Heart left ventricle (tissue), 16 donors: ENCODE measurements at regions of chr11 and their contacts with region 1.

Region 1: GRCh38 chr11:114059278-114059983 is at the start of gene ZBTB16:
- DNase-seq: peak; percentile 89 to 95 (median 92)
- ATAC-seq: peak; percentile 66 to 82 (median 76)
- H3K4me3 ChIP-seq: peak within 1 kb of the TSS; percentile 60 to 99 (median 80)
- H3K27ac ChIP-seq: peak within 1 kb of the TSS; percentile 79 to 100 (median 98)
- H3K4me1 ChIP-seq: peaks cover 14 to 64% (median 48%) of the 10 kb centered on the region in 12 donors
- H3K27me3 ChIP-seq: peaks cover 0 to 13% (median 0%) of the 10 kb centered on the region in 9 donors
- CTCF ChIP-seq: peak in 11 of 12 donors; percentile 10 to 87 (median 42)
- POLR2A ChIP-seq: peak; percentile 92 to 98
- total RNA-seq, gene ZBTB16: 15.3 to 130 (median 62.8) TPM

Region 2: GRCh38 chr11:114036156-114036811 is 23.1 kb before region 1 on chr11:
- intact Hi-C with region 1: loop called in 2 of 10 experiments (anchors 2 kb)
- DNase-seq: peak; percentile 83 to 93 (median 91)
- ATAC-seq: peak; percentile 84 to 96 (median 94)
- H3K4me3 ChIP-seq: peak overlapping the region in 10 of 12 donors; percentile 26 to 60 (median 48)
- H3K27ac ChIP-seq: peak overlapping the region in 10 of 12 donors; percentile 50 to 88 (median 75)
- H3K4me1 ChIP-seq: peaks cover 4 to 30% (median 11%) of the 10 kb centered on the region in 12 donors
- H3K27me3 ChIP-seq: no peaks in the 10 kb centered on the region
- CTCF ChIP-seq: peak; percentile 85 to 96 (median 94)
- POLR2A ChIP-seq: peak in 1 of 2 donors; percentile 39

Region 3: DNA sequence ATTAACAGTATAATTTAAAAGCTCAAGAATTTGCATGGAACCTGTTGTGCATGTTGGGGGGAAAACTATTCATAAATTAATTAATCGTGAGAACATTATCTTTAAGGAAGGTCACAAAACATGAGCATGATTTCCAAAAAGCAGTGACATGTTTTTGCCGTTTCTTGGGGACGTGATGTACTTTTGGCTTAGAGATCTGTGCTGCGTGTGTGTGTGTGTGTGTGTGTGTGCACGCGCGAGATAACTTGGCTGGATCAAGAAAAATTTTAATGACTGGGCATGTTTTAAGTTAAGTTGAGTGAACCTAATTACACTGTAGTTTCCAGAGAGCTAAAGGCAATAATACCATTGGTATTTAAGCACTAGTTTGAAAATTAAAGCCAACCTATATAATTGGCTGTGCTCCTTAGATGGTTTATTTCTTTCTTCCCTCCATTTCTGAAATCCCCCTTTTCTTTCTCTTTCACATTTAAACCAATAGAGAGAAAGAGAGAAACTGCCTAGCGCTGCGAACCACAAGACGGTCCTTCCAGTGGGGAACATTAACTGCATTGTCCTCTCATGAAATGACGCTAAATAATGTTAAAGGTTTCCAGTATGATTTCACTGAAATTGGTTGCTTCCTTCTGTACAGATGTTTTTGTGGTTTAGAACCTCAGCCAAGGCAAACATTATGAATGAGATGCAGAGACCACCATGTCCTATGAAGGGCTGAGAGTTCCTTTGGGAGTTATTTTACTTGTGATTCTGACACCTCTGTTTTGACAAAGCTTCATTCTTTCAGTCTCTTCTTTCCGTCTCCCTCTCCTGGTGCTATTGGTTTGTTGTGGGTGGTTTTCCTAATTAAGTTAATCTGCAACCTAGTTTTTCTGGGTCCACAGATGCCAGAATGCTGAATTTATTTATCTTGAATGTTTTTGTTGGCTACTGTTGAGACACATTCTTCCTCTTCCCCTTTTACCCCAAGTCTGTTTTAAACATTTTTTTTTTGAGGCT is 51.8 kb after region 1 on chr11:
- intact Hi-C with region 1: loop called in 4 of 10 experiments (anchors 5 to 10 kb)
- DNase-seq: peak in 2 of 5 donors; percentile 59 to 73
- ATAC-seq: peak; percentile 30 to 72 (median 38)
- H3K4me3 ChIP-seq: peak overlapping the region in 9 of 12 donors; percentile 7 to 47 (median 36)
- H3K27ac ChIP-seq: peak overlapping the region; percentile 59 to 87 (median 74)
- H3K4me1 ChIP-seq: peaks cover 16 to 99% (median 71%) of the 10 kb centered on the region in 12 donors
- H3K27me3 ChIP-seq: no peaks in the 10 kb centered on the region
- CTCF ChIP-seq: peak in 1 of 12 donors; percentile 23
- POLR2A ChIP-seq: no peak

Region 4: DNA sequence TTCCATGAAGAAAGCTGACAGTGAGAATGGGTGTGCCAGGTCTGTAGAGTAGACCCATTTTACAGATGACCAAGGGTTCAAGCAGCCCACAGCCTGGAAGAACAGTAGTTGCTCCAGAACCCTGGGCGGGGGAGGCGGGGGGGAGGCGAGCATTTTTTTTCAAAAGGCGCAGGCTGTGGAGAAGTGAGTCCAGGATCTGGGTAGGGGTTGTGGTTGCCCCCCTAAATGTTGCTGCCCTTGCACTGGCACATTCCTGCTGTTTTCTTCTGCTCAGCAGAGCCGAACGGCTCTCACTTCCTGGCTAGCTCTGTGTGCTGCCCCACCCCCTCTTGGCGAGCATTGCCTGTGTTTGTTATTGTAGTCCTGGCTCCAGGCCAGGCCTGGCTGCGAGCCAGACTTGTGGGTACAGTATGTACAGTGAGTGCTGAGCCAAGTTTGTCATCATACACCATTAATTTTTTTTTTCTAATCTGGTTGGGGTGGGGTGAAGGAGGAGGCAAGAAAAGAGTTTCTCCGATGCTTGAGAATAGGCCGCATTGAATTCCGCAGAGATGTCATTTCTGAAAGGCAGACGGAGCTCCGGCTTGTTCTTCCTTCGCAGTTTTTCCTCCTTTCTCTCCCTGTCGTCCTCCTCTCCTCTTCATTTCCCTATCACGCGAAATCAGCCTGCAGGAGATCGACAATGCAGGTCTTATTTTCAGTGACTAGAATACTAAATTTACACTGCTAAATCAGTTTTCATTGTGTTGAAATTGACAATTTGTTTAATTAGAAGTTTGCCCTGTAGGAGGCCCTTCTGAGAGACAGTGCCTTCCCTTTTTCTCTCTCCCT is 100.6 kb after region 1 on chr11:
- intact Hi-C with region 1: loop called in 6 of 10 experiments (anchors 1 to 5 kb)
- DNase-seq: peak; percentile 98 to 100 (median 99)
- ATAC-seq: peak; percentile 65 to 80 (median 72)
- H3K4me3 ChIP-seq: peak overlapping the region in 11 of 12 donors; percentile 18 to 46 (median 33)
- H3K27ac ChIP-seq: peak overlapping the region; percentile 87 to 100 (median 98)
- H3K4me1 ChIP-seq: peaks cover 54 to 99% (median 90%) of the 10 kb centered on the region in 12 donors
- H3K27me3 ChIP-seq: no peaks in the 10 kb centered on the region
- CTCF ChIP-seq: peak in 1 of 12 donors; percentile 9
- POLR2A ChIP-seq: peak; percentile 33 to 79

Region 5: DNA sequence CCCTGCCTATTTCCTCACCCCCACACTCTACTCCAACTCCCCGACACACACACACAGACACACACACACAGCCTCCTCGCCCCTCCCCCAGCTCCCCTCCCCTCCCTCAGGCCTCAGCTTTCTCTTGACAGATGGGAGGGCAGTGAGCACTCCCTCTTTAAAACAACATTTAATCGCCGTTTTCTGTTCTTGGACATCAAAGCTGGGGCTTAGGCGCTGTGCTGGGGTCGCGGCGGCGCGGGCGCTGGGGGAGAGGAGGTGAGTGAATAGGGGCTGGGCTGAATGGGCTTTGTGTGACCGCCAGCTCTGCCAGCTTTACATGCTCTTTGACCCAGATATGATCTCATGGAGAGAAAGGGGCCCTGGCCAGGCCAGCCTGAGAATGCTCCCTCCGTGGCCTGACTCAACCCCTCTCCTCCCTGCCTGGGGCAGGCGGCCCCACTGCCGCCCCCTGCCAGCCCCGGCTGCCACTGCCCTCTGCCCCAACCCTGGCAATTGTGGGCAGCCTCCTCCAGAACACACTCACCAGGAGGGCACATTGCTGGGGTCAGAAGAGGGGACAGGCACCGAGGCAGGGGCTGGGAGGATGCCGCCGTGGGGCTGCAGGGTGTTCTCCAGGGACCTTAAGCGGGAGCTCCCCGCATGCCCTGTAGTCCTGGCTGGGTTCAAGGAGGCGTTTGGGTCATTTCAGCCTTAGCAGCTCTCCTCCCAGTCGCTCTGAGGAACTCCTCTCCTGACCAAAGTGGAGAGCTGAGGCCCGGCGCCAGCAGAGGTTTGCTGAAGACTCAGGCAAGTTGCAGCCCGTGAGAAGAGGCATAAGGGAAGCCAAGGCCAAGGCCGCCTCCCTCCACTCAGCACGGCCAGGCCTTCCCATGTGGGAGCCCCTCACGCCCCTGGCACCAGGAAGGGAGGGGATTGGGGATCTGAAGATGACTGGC is 198.5 kb after region 1 on chr11:
- intact Hi-C with region 1: loop called in 8 of 10 experiments (anchors 1 to 5 kb)
- DNase-seq: peak; percentile 39 to 76 (median 69)
- ATAC-seq: peak; percentile 13 to 68 (median 52)
- H3K4me3 ChIP-seq: peak overlapping the region in 9 of 12 donors; percentile 5 to 39 (median 26)
- H3K27ac ChIP-seq: peak overlapping the region; percentile 47 to 85 (median 75)
- H3K4me1 ChIP-seq: peaks cover 0 to 87% (median 47%) of the 10 kb centered on the region in 12 donors
- H3K27me3 ChIP-seq: no peaks in the 10 kb centered on the region
- CTCF ChIP-seq: peak in 8 of 12 donors; percentile 21 to 55 (median 36)
- POLR2A ChIP-seq: no peak